A673 (cell line): ENCODE measurements at regions of chr17 and their contacts with region 1.

Region 1: DNA sequence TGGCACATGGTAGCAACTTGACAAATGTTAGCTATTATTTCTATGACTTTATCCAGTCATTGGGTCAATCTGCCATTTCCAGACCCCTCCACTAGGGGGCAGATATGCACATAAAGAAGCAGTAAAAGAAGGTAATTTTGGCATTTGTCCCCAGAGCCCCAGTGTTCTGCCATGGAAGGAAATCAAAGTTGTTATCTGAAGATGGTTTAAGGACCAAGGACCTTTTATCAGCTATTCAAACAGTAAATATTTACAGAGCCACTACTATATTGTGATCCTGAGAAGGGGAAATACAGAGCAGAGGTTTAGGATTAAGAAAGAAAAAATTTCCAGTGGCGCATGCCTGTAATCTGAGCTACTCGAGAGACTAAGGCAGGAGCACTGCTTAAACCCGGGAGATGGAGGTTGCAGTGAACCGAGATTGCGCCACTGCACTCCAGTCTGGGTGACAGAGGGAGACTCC is 20.0 kb downstream of the TRAF4 start:
- DNase-seq: peak; percentile 89
- H3K4me3 ChIP-seq: no peak overlapping the region
- H3K27ac ChIP-seq: no peak overlapping the region
- H3K4me1 ChIP-seq: peaks cover 29% of the 10 kb centered on the region
- H3K27me3 ChIP-seq: no peaks in the 10 kb centered on the region
- CTCF ChIP-seq: peak; percentile 96

Region 2: GRCh38 chr17:28693869-28694268 is 70.0 kb before region 1 on chr17:
- CTCF ChIA-PET with region 1: no interaction called
- POLR2A ChIA-PET with region 1: no interaction called
- intact Hi-C with region 1: no loop called
- DNase-seq: no peak
- H3K4me3 ChIP-seq: no peak overlapping the region
- H3K27ac ChIP-seq: no peak overlapping the region
- H3K4me1 ChIP-seq: no peaks in the 10 kb centered on the region
- H3K27me3 ChIP-seq: no peaks in the 10 kb centered on the region
- CTCF ChIP-seq: no peak

Region 3: GRCh38 chr17:28792877-28793661 is 29.2 kb after region 1 on chr17:
- CTCF ChIA-PET with region 1: interaction called, 3 read pairs
- POLR2A ChIA-PET with region 1: no interaction called
- intact Hi-C with region 1: loop called (anchors 5 kb)
- DNase-seq: peak; percentile 47
- H3K4me3 ChIP-seq: no peak overlapping the region
- H3K27ac ChIP-seq: no peak overlapping the region
- H3K4me1 ChIP-seq: peaks cover 19% of the 10 kb centered on the region
- H3K27me3 ChIP-seq: no peaks in the 10 kb centered on the region
- CTCF ChIP-seq: no peak

Region 4: DNA sequence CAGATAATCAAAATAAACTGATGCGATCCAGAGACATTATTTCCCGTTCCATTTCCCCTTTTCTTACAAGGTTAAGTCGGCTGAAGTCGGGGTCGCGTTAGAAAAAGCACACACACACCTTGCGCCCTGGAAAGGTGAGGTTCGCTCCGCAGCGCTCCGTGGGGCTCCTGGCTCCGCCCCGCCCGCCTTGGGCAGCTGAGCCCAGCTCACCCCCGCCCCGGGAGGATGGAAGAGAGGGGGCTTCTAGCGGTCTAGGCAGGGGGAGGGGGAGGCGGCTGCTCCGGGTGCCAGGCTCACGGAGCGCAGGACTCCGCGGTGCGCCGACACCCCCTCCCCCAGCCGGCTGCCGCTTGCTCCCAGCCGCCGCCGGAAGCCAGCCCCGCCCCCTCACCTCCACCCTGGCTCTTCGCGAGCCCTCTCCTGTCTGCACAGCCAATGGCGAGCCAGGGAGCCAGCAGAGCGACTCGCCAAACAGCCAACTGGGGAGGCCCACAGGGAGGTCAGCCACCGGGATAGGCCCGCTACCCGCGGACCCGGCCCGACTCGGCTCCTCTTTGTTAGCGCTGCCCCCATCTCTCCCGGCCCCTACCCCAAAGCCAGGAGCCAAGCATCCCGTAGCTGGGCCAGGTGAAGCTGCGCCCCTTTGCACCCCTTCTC is 48.4 kb after region 1 on chr17:
- CTCF ChIA-PET with region 1: interaction called, 3 read pairs
- POLR2A ChIA-PET with region 1: no interaction called
- intact Hi-C with region 1: loop called (anchors 5 kb)
- DNase-seq: peak; percentile 99
- H3K4me3 ChIP-seq: peak overlapping the region; percentile 81
- H3K27ac ChIP-seq: peak overlapping the region; percentile 81
- H3K4me1 ChIP-seq: peaks cover 40% of the 10 kb centered on the region
- H3K27me3 ChIP-seq: no peaks in the 10 kb centered on the region
- CTCF ChIP-seq: no peak

Region 5: DNA sequence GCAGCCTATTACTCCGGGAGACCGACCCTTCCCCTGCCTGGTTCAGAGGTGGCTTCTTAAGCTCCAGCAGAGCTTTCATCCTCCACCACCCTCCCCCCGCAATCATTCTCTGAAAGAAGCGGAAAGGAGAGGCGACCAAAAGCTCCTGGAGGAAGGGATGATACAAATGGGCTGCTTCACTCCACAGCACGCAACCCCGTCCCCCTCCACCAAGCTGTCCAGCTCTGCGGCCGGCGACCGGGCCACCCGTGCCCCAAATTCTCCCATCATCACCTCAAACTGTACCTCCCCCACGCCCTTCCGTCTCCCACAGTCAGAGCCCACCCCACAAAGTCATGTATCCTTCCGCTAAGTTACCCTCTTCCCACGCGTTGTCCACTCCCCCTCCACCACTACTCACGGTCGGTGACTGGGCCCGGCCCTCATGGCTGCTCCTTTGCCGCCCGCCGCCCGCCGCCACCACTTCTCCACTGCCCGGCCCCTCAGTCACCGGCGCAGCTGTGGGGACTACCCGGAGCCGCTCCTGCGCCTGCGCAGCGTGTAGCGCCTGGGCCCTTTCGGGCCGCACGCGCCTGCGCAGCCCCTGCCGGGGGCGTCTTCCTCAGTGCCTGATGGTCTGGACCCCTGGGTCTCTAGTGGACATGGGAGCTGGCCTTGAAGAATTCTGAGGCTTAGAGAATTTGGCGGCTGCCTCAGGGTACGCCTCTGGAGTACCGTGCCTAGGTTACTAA is 78.6 kb after region 1 on chr17 and contains the start of gene FAM222B:
- CTCF ChIA-PET with region 1: interaction called, 7 read pairs
- POLR2A ChIA-PET with region 1: no interaction called
- intact Hi-C with region 1: loop called (anchors 5 kb)
- DNase-seq: peak; percentile 95
- H3K4me3 ChIP-seq: peak within 1 kb of the TSS; percentile 87
- H3K27ac ChIP-seq: peak within 1 kb of the TSS; percentile 74
- H3K4me1 ChIP-seq: peaks cover 11% of the 10 kb centered on the region
- H3K27me3 ChIP-seq: no peaks in the 10 kb centered on the region
- CTCF ChIP-seq: no peak
- total RNA-seq, gene FAM222B: 27.3 and 31.8 TPM in 2 replicates

Region 6: DNA sequence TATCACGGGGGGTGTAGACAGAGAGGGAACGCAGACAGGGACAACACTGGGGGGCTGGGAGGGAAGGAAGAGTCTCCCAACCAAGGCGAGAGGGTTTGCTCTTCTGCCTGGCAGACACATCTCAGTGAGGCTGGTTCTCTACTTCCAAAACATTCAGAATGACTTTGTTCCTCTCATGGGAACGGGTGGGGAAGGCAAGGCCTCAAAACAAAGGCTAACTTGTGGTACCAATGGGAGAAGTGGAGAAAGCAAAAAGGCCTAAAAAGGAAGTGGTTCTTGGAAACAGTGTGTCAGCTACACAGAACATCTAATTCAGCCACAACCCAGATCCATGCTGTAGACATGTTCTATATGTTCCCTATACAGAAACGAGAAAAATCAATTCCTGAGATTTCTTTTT is 126.2 kb after region 1 on chr17:
- CTCF ChIA-PET with region 1: no interaction called
- POLR2A ChIA-PET with region 1: no interaction called
- intact Hi-C with region 1: no loop called
- DNase-seq: no peak
- H3K4me3 ChIP-seq: no peak overlapping the region
- H3K27ac ChIP-seq: no peak overlapping the region
- H3K4me1 ChIP-seq: peaks cover 11% of the 10 kb centered on the region
- H3K27me3 ChIP-seq: no peaks in the 10 kb centered on the region
- CTCF ChIP-seq: no peak

Region 7: GRCh38 chr17:28902819-28903545 is 139.1 kb after region 1 on chr17 and contains the start of gene DHRS13:
- CTCF ChIA-PET with region 1: interaction called, 8 read pairs
- POLR2A ChIA-PET with region 1: no interaction called
- intact Hi-C with region 1: loop called (anchors 1 kb)
- DNase-seq: peak; percentile 96
- H3K4me3 ChIP-seq: peak within 1 kb of the TSS; percentile 90
- H3K27ac ChIP-seq: peak within 1 kb of the TSS; percentile 90
- H3K4me1 ChIP-seq: peaks cover 37% of the 10 kb centered on the region
- H3K27me3 ChIP-seq: no peaks in the 10 kb centered on the region
- CTCF ChIP-seq: peak; percentile 93
- total RNA-seq, gene DHRS13: 37.3 and 41.9 TPM in 2 replicates

Region 8: GRCh38 chr17:29042679-29043538 is 279.1 kb after region 1 on chr17 and contains the start of gene PIPOX:
- CTCF ChIA-PET with region 1: no interaction called
- POLR2A ChIA-PET with region 1: no interaction called
- intact Hi-C with region 1: no loop called
- DNase-seq: peak; percentile 94
- H3K4me3 ChIP-seq: peak within 1 kb of the TSS; percentile 7
- H3K27ac ChIP-seq: peak within 1 kb of the TSS; percentile 70
- H3K4me1 ChIP-seq: peaks cover 61% of the 10 kb centered on the region
- H3K27me3 ChIP-seq: no peaks in the 10 kb centered on the region
- CTCF ChIP-seq: peak; percentile 65
- total RNA-seq, gene PIPOX: 7.8 and 8.8 TPM in 2 replicates